ENCODE measurements at regions of chr1 and their contacts with region 1.

Region 1: DNA sequence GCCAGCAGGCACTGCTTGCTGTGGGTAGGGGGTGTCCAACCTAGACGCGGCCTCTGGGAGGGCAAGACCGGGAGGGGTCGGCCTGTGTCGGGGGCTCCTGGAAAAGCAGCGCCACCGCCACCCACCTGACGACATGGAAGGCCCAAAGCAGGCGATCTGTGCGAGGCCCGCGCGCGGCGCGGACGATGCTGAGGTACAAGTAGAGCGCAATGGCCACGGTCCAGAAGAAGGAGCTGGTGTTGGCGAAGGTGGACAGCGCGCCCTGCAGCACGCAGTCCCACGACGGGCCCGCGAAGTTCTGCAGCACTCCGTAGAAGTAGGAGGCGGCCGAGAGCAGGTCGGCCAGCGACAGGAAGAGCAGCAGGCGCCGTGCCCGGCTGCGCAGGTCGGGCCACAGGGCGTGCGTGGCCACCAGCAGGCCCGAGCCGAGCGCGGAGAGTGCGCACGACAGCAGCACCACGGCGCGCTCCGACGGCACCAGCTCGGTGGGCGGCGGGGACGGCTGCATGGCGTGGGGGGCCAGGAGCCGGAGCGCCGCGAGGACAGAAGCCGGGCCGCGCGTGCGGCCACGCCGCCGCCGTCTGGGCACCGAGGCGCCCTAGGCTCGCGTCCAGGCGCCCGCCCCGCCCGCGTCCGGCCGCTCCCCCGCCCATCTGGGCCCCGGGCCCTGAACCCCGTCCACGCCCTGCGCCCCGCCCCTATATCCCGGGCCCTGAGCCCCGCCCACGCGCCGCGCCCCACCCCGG is at the start of gene GPR157:
- DNase-seq: peak; percentile 52 to 78
- H3K4me3 ChIP-seq: peak within 1 kb of the TSS; percentile 70
- H3K27ac ChIP-seq: peak within 1 kb of the TSS; percentile 44; the same call in 1 of the 2 replicates
- H3K4me1 ChIP-seq: peaks cover 33% of the 10 kb centered on the region
- H3K27me3 ChIP-seq: no peaks in the 10 kb centered on the region
- CTCF ChIP-seq: no peak
- total RNA-seq, gene GPR157: 9.0 and 10.6 TPM in 2 replicates

Region 2: GRCh38 chr1:9181176-9181906 is 52.6 kb after region 1 on chr1:
- CTCF ChIA-PET with region 1: no interaction called
- POLR2A ChIA-PET with region 1: interaction called, 7 read pairs
- intact Hi-C with region 1: loop called (anchors 5 kb)
- DNase-seq: peak in 1 of 2 experiments; percentile 64
- H3K4me3 ChIP-seq: peak overlapping the region; percentile 48; the same call in 1 of the 2 replicates
- H3K27ac ChIP-seq: no peak overlapping the region
- H3K4me1 ChIP-seq: peaks cover 16% of the 10 kb centered on the region
- H3K27me3 ChIP-seq: no peaks in the 10 kb centered on the region
- CTCF ChIP-seq: peak; percentile 84

Region 3: DNA sequence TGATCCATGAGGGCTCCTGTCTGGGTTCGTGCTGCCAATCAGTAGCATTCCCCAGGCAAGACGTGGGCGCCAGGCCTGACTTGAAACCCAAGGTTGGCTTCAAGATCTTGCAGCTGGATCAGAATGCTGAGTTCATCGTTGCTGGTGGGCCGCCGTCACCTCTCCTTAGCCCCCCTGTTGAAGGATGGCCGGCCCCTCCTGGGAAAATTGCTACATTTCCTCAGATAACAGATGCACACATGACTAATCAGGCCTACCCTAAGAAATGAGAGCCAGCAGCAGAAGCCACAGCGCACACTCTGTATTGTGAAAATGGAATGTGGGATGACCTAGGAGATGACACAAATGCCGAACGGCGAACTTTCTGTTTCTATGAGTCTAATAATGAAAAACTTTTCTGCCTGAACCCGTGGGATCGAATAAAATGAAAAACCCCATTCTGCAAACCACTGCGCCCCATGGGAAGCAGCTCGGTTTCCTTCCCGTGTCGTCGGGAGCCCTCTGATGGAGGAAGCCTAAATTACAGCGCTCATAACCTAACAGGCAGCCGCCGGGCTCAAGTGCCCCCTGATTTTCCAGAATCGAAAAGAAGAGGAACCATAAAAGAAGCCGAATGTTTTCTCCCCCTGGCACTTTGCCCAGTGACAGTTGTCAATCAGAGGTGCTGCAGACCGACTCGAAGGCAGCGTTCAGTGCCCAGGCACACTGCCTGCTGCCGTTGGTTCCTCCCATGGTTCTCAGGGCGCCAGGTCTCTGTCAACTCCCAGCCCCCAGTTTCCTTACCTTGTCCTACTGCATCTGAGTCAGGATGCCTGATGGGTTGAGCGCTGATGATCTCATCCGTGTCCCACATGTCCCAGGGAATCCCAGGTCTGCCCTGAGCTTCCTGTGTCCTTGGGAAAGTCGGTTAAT is 67.7 kb after region 1 on chr1:
- CTCF ChIA-PET with region 1: interaction called, 4 read pairs
- POLR2A ChIA-PET with region 1: interaction called, 7 read pairs
- intact Hi-C with region 1: loop called (anchors 5 kb)
- DNase-seq: peak; percentile 41 to 51
- H3K4me3 ChIP-seq: no peak overlapping the region
- H3K27ac ChIP-seq: no peak overlapping the region
- H3K4me1 ChIP-seq: peaks cover 14% of the 10 kb centered on the region
- H3K27me3 ChIP-seq: no peaks in the 10 kb centered on the region
- CTCF ChIP-seq: peak; percentile 76

Region 4: GRCh38 chr1:9473032-9473792 is 344.5 kb after region 1 on chr1:
- CTCF ChIA-PET with region 1: no interaction called
- POLR2A ChIA-PET with region 1: no interaction called
- intact Hi-C with region 1: no loop called
- DNase-seq: peak; percentile 71 to 77
- H3K4me3 ChIP-seq: no peak overlapping the region
- H3K27ac ChIP-seq: no peak overlapping the region
- H3K4me1 ChIP-seq: peaks cover 15% of the 10 kb centered on the region; the same call in 1 of the 2 replicates
- H3K27me3 ChIP-seq: no peaks in the 10 kb centered on the region
- CTCF ChIP-seq: no peak